ENCODE measurements at regions of chr11 and their contacts with region 1.

Region 1: GRCh38 chr11:25910086-25910485 is 421.8 kb upstream of the ANO3 start:
- DNase-seq: no peak
- H3K4me3 ChIP-seq: no peak overlapping the region
- H3K27ac ChIP-seq: no peak overlapping the region
- H3K4me1 ChIP-seq: no peaks in the 10 kb centered on the region
- H3K27me3 ChIP-seq: no peaks in the 10 kb centered on the region
- CTCF ChIP-seq: no peak
- POLR2A ChIP-seq: no peak

Region 2: DNA sequence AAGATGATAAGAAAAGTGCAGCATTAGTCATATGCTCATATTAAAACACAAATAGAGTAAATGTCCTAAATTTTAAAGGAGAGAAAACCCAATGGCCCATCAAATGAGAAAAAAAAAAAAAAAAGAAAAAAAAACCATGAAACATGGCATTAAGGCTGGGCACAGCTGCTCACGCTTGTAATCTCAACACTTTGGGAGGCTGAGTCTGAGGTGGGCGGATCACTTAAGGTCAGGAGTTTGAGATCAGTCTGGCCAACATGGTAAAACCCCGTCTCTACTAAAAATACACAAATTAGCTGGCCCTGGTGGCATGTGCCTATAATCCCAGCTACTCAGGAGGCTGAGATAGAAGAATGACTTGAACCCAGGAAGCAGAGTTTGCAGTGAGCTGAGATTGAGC is 93.7 kb before region 1 on chr11:
- intact Hi-C with region 1: no loop called
- DNase-seq: no peak
- H3K4me3 ChIP-seq: no peak overlapping the region
- H3K27ac ChIP-seq: no peak overlapping the region
- H3K4me1 ChIP-seq: no peaks in the 10 kb centered on the region
- H3K27me3 ChIP-seq: no peaks in the 10 kb centered on the region
- CTCF ChIP-seq: no peak
- POLR2A ChIP-seq: no peak

Region 3: DNA sequence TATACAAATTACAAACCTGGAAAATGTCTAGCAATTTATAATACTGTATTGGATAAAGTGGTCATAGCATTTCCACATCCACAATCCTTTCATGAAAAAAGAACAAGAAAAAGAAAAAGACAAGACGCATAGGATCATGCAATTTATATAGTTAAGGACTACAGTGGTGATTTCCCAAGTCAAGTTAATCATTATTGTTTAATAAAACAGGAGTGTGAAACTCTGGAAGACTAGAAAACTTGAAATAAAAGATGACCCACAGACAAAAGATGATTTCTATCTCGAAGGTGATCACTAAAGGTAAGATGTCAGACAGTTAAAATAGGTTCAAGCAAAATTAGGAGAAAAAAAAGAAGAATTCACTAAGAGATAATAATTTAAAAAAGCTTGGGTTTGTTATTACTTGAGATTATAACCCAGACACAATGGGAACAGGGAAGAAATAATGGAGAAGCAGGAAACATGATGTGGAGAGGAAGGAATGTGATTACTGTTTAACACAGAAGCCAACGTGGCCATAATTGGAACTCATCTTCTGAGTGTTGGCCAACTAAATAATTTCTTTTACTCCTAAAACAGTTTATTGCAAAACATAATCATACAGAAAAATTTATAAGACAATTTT is 19.3 kb before region 1 on chr11:
- intact Hi-C with region 1: loop called (anchors 1 kb)
- DNase-seq: no peak
- H3K4me3 ChIP-seq: no peak overlapping the region
- H3K27ac ChIP-seq: no peak overlapping the region
- H3K4me1 ChIP-seq: no peaks in the 10 kb centered on the region
- H3K27me3 ChIP-seq: no peaks in the 10 kb centered on the region
- CTCF ChIP-seq: no peak
- POLR2A ChIP-seq: no peak

Region 4: GRCh38 chr11:25920356-25920755 is 10.3 kb after region 1 on chr11:
- intact Hi-C with region 1: loop called (anchors 1 kb)
- DNase-seq: no peak
- H3K4me3 ChIP-seq: no peak overlapping the region
- H3K27ac ChIP-seq: no peak overlapping the region
- H3K4me1 ChIP-seq: no peaks in the 10 kb centered on the region
- H3K27me3 ChIP-seq: no peaks in the 10 kb centered on the region
- CTCF ChIP-seq: no peak
- POLR2A ChIP-seq: no peak

Region 5: DNA sequence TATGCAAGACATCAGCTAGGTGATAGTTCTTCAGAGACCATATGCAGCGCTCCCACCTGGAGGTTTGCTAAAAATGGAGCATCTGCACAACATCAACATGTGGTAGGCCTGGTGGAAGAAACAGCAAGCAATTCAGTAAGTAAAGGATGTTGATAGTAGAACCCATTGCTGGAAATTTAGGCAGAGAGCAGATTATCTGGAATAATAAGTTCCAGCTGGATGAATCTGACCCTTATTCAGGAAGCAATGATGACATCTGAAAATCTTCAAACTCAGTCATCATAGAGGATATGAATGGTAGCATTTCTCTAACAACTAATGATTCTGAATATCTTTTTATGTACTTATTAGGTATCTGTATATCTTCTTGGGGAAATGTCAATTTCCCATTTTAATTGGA is 196.6 kb after region 1 on chr11:
- intact Hi-C with region 1: no loop called
- DNase-seq: no peak
- H3K4me3 ChIP-seq: no peak overlapping the region
- H3K27ac ChIP-seq: no peak overlapping the region
- H3K4me1 ChIP-seq: no peaks in the 10 kb centered on the region
- H3K27me3 ChIP-seq: no peaks in the 10 kb centered on the region
- CTCF ChIP-seq: no peak
- POLR2A ChIP-seq: no peak